B cell (primary cell): ENCODE measurements at regions of chr2 and their contacts with region 1.

Region 1: DNA sequence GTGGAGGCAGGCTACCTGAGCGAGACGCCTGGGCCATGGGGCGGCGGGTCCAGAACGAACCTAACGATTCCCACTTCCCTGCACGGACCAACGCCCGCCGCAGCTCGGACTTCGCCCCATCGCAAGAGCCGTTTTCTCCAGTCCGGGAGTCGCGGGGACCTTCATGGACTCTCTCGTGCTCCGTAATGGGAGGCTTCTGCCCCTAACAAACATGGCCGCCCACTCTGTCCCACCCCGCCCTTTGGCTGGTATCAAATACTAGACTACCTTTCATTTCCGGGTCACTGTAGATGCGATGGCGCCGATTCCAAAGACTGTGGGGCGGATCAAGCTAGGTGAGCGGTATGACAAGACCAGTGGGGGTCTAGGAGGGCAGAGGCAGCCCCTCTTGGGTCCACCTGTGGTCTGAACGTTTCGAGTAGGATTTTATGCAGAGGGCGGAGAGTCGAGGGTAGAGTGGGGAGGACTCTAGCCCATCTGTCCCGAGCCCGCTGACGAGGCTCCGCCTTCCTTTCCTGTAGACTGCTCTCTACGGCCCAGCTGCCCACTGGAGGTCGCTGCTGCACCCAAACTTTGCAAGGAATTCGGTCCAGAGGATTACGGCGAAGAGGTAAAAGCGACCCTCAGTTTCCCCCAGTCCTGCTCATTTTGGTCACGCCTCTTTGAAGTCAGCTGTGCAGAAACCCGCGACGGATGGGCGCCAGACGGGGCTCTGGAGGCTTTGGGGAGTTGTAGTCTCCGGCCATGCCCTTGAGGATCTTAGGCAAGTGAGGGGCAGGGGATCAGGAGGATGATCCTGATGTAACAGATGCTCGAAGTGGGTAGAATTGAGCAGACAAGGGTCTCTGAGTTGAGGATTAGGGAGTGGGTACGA is at the starts of genes CCDC142 and TTC31:
- DNase-seq: peak; percentile 97
- ATAC-seq: peak; percentile 90
- H3K4me3 ChIP-seq: peak within 1 kb of the TSS; percentile 74 to 96 (median 88)
- H3K4me3 Mint-ChIP-seq: peak within 1 kb of the TSS; percentile 100
- H3K27ac ChIP-seq: peak within 1 kb of the TSS; percentile 71 to 84
- H3K27ac Mint-ChIP-seq: peak within 1 kb of the TSS; percentile 99
- H3K4me1 ChIP-seq: peaks cover 21 to 29% of the 10 kb centered on the region in 2 donors
- H3K4me1 Mint-ChIP-seq: peaks cover 34% of the 10 kb centered on the region
- H3K27me3 ChIP-seq: no peaks in the 10 kb centered on the region
- H3K27me3 Mint-ChIP-seq: no peaks in the 10 kb centered on the region
- CTCF ChIP-seq: peak; percentile 90
- total RNA-seq, gene CCDC142: 61.6 and 69.3 TPM in 2 replicates
- total RNA-seq, gene TTC31: 69.4 and 72.3 TPM in 2 replicates

Region 2: GRCh38 chr2:74421221-74421870 is 61.7 kb before region 1 on chr2 and contains the starts of genes C2orf81 and WDR54:
- CTCF ChIA-PET with region 1: no interaction called
- POLR2A ChIA-PET with region 1: no interaction called
- intact Hi-C with region 1: loop called (anchors 2 kb)
- DNase-seq: peak; percentile 97
- ATAC-seq: peak; percentile 90
- H3K4me3 ChIP-seq: peak within 1 kb of the TSS; percentile 61 to 98 (median 90)
- H3K4me3 Mint-ChIP-seq: peak within 1 kb of the TSS; percentile 98
- H3K27ac ChIP-seq: peak within 1 kb of the TSS; percentile 94
- H3K27ac Mint-ChIP-seq: peak within 1 kb of the TSS; percentile 99
- H3K4me1 ChIP-seq: peaks cover 29 to 41% of the 10 kb centered on the region in 2 donors
- H3K4me1 Mint-ChIP-seq: peaks cover 43% of the 10 kb centered on the region
- H3K27me3 ChIP-seq: no peaks in the 10 kb centered on the region
- H3K27me3 Mint-ChIP-seq: no peaks in the 10 kb centered on the region
- CTCF ChIP-seq: no peak
- total RNA-seq, gene C2orf81: 8.6 and 9.1 TPM in 2 replicates
- total RNA-seq, gene WDR54: 39.0 and 42.2 TPM in 2 replicates

Region 3: GRCh38 chr2:74472086-74472944 is 10.7 kb before region 1 on chr2 and contains the start of gene MRPL53:
- CTCF ChIA-PET with region 1: interaction called, 11 read pairs
- POLR2A ChIA-PET with region 1: interaction called, 36 read pairs
- intact Hi-C with region 1: loop called (anchors 1 kb)
- DNase-seq: peak; percentile 97
- ATAC-seq: peak; percentile 93
- H3K4me3 ChIP-seq: peak within 1 kb of the TSS; percentile 65 to 89 (median 67)
- H3K4me3 Mint-ChIP-seq: peak within 1 kb of the TSS; percentile 99
- H3K27ac ChIP-seq: peak within 1 kb of the TSS; percentile 69 to 94
- H3K27ac Mint-ChIP-seq: peak within 1 kb of the TSS; percentile 99
- H3K4me1 ChIP-seq: peaks cover 16 to 22% of the 10 kb centered on the region in 2 donors
- H3K4me1 Mint-ChIP-seq: peaks cover 20% of the 10 kb centered on the region
- H3K27me3 ChIP-seq: no peaks in the 10 kb centered on the region
- H3K27me3 Mint-ChIP-seq: no peaks in the 10 kb centered on the region
- CTCF ChIP-seq: no peak
- total RNA-seq, gene MRPL53: 61.5 and 70.0 TPM in 2 replicates

Region 4: GRCh38 chr2:74498500-74499266 is 15.6 kb after region 1 on chr2:
- CTCF ChIA-PET with region 1: interaction called, 16 read pairs
- POLR2A ChIA-PET with region 1: interaction called, 8 read pairs
- intact Hi-C with region 1: no loop called
- DNase-seq: peak; percentile 60
- ATAC-seq: no peak
- H3K4me3 ChIP-seq: peak overlapping the region; percentile 26 to 69 (median 38)
- H3K4me3 Mint-ChIP-seq: peak overlapping the region; percentile 92
- H3K27ac ChIP-seq: no peak overlapping the region
- H3K27ac Mint-ChIP-seq: peak overlapping the region; percentile 64
- H3K4me1 ChIP-seq: peaks cover 46 to 49% of the 10 kb centered on the region in 2 donors
- H3K4me1 Mint-ChIP-seq: peaks cover 45% of the 10 kb centered on the region
- H3K27me3 ChIP-seq: peaks cover 0 to 67% (median 36%) of the 10 kb centered on the region in 4 experiments
- H3K27me3 Mint-ChIP-seq: peaks cover 50% of the 10 kb centered on the region
- CTCF ChIP-seq: no peak

Region 5: GRCh38 chr2:74507145-74507925 is 24.3 kb after region 1 on chr2 and contains the start of gene PCGF1:
- CTCF ChIA-PET with region 1: interaction called, 16 read pairs
- POLR2A ChIA-PET with region 1: interaction called, 3 read pairs
- intact Hi-C with region 1: loop called (anchors 1 kb)
- DNase-seq: peak; percentile 100
- ATAC-seq: peak; percentile 85
- H3K4me3 ChIP-seq: peak within 1 kb of the TSS; percentile 78 to 97 (median 83)
- H3K4me3 Mint-ChIP-seq: peak within 1 kb of the TSS; percentile 96
- H3K27ac ChIP-seq: peak within 1 kb of the TSS; percentile 91 to 96
- H3K27ac Mint-ChIP-seq: peak within 1 kb of the TSS; percentile 99
- H3K4me1 ChIP-seq: peaks cover 31 to 38% of the 10 kb centered on the region in 2 donors
- H3K4me1 Mint-ChIP-seq: peaks cover 56% of the 10 kb centered on the region
- H3K27me3 ChIP-seq: peaks cover 0 to 56% (median 14%) of the 10 kb centered on the region in 4 experiments
- H3K27me3 Mint-ChIP-seq: peaks cover 41% of the 10 kb centered on the region
- CTCF ChIP-seq: peak; percentile 64
- total RNA-seq, gene PCGF1: 34.3 and 40.1 TPM in 2 replicates

Region 6: DNA sequence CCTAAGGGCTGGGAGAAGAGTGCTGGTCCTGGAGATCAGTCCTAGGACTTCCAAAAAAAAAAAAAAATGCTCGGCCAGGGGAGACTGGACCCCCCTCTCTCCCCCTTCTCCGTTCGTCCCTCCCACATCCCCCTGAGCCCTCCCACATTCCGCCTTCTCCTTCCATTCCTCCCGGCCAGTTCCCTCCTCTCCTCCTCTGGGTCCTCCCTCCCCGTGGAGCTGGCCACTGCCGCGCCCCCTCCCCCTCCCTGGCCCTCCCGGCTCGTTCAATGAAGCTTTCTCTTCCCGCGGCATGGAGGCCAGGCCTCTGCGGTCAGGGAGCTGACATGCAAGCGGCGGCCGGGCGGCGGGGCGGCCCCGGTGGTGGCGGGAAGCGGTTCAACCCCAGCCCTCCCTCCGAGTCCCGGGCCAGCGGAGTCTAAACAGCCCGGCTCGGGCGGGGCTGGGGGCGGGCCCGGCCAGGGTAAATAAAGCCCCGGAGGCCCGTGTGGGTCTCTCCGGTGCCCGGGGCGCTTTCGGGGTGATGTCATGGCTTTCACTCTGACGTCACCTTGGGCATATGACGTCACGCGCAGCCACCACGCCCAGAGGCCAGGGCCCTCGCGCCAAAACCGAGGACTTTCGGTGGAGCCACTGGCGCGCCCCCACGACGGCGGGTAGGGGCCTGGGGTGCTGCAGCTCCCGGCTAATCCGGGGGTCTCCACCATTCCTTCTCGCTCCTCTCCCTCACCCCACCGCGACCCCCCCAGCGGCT is 71.0 kb after region 1 on chr2 and contains the start of gene LOXL3:
- CTCF ChIA-PET with region 1: no interaction called
- POLR2A ChIA-PET with region 1: no interaction called
- intact Hi-C with region 1: loop called (anchors 2 kb)
- DNase-seq: peak; percentile 93
- ATAC-seq: peak; percentile 48
- H3K4me3 ChIP-seq: peak within 1 kb of the TSS; percentile 51 to 99 (median 84)
- H3K4me3 Mint-ChIP-seq: peak within 1 kb of the TSS; percentile 96
- H3K27ac ChIP-seq: peak within 1 kb of the TSS; percentile 64 to 76
- H3K27ac Mint-ChIP-seq: peak within 1 kb of the TSS; percentile 94
- H3K4me1 ChIP-seq: peaks cover 16 to 39% of the 10 kb centered on the region in 2 donors
- H3K4me1 Mint-ChIP-seq: peaks cover 24% of the 10 kb centered on the region
- H3K27me3 ChIP-seq: peaks cover 0 to 15% (median 8%) of the 10 kb centered on the region in 4 experiments
- H3K27me3 Mint-ChIP-seq: no peaks in the 10 kb centered on the region
- CTCF ChIP-seq: no peak
- total RNA-seq, gene LOXL3: 0.66 and 1.2 TPM in 2 replicates